HepG2 (cell line): ENCODE measurements at regions of chr22 and their contacts with region 1.

Region 1: GRCh38 chr22:37566903-37567820 is 6.9 kb downstream of the CDC42EP1 start:
- DNase-seq: peak; percentile 61
- ATAC-seq: peak; percentile 27
- H3K4me3 ChIP-seq: no peak overlapping the region; a peak in 1 of 6 replicates
- H3K27ac ChIP-seq: no peak overlapping the region
- H3K4me1 ChIP-seq: peaks cover 90% of the 10 kb centered on the region
- H3K27me3 ChIP-seq: no peaks in the 10 kb centered on the region
- CTCF ChIP-seq: peak; percentile 96
- EP300 ChIP-seq: 0 out of 4 replicates have a peak, but pooled peaks of 1 of the 2 experiments have one; percentile 13
- POLR2A ChIP-seq: peak; percentile 10 to 40; a peak in 1 of 4 replicates
- RAD21 ChIP-seq: peak; percentile 97

Region 2: DNA sequence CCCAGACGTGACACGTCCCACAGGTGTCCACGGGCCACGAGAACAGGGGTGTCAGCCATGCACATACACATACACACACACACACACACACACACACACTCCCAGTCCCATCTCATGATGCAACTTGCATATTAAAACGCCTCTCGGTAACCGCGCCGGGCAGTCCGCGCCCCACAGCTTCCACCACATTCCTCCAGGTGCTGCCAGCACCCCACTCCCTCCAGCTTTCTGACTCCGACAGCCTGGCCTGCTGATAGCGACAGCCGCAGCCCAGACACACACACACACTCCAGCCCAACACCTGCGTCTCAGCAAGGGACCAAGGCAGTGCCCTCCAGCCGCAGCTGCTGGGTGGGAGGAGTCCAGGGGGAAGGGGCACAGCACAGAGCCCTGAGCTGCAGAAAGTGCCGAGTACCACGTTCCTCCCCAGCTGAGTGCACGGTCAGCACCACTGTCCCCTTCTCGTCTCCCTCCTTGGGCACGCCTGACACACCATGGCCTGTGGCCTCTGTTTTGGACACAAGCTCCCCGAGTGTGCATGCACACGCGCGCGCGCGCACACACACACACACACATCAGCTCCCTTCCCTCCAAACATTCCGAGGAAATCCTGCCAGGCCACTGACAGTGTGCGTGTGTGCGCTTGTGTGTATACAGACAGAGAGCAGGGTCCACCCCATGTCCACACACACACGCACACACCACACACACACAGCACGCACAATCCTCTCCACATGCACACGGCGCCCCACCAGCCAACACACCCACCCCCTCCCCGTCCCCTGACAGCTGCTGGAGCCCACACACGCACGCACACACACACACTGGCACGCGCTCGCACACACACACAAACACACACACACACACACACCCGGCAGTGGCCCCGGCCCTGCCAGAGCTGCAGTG is 141.1 kb before region 1 on chr22:
- CTCF ChIA-PET with region 1: no interaction called
- POLR2A ChIA-PET with region 1: no interaction called
- in situ Hi-C with region 1: no loop called
- intact Hi-C with region 1: no loop called
- DNase-seq: no peak
- ATAC-seq: no peak
- H3K4me3 ChIP-seq: no peak overlapping the region
- H3K27ac ChIP-seq: no peak overlapping the region
- H3K4me1 ChIP-seq: peaks cover under 1% of the 10 kb centered on the region; the same call in 1 of the 2 replicates
- H3K27me3 ChIP-seq: peaks cover 15 to 62% of the 10 kb centered on the region in 2 experiments
- CTCF ChIP-seq: no peak
- EP300 ChIP-seq: no peak
- POLR2A ChIP-seq: no peak
- RAD21 ChIP-seq: no peak

Region 3: DNA sequence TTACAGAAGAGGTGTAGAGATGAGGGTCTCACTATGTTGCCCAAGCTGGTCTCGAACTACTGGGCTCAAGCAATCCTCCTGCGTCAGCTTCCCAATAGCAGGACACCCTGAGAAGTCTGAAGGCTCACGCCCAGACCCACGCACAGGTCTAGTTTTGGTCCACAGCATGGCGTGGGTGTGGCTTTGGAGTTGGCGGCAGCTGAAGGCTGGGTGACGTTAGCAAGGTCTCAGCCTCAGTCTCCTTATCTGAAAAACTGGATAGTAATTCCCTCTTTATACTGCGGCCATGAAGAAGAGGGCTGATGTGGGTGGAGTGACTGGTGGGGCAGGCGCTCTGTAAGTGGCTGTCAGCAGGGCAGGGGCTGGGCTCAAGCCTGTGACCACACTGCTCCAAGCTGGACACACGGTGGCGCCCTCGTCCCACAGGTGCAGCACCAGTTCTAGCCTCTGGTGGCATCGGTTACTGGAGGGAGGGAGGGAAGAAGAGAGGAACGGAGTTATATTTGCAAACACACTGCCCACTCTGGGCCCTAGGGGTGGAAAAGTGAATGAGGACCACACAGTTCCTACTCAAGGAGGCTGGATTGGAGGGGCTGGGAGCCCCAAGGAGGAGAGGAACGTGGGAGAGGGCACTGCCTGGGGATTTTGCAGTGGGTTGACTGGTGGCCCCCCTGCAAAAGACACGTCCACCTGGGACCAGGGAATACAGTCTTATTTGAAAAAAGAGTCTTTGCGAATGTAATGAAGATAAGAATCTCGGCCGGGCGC is 28.4 kb before region 1 on chr22:
- CTCF ChIA-PET with region 1: interaction called, 66 read pairs
- POLR2A ChIA-PET with region 1: interaction called, 976 read pairs
- in situ Hi-C with region 1: loop called (anchors 5 kb)
- intact Hi-C with region 1: no loop called
- DNase-seq: peak; percentile 88
- ATAC-seq: peak; percentile 98
- H3K4me3 ChIP-seq: peak overlapping the region in 1 of 3 experiments; percentile 32; a peak in 2 of 6 replicates
- H3K27ac ChIP-seq: no peak overlapping the region
- H3K4me1 ChIP-seq: peaks cover 77% of the 10 kb centered on the region
- H3K27me3 ChIP-seq: 0 out of 5 replicates have a peak, but pooled peaks cover 0 to 2% of the 10 kb centered on the region in 2 experiments
- CTCF ChIP-seq: peak; percentile 100
- EP300 ChIP-seq: peak; percentile 27 to 36; a peak in 2 of 4 replicates
- POLR2A ChIP-seq: no peak
- RAD21 ChIP-seq: peak; percentile 99

Region 4: GRCh38 chr22:37544955-37545699 is 22.0 kb before region 1 on chr22:
- CTCF ChIA-PET with region 1: interaction called, 66 read pairs
- POLR2A ChIA-PET with region 1: interaction called, 976 read pairs
- in situ Hi-C with region 1: no loop called
- intact Hi-C with region 1: loop called (anchors 1 kb)
- DNase-seq: peak; percentile 81
- ATAC-seq: peak; percentile 55
- H3K4me3 ChIP-seq: peak overlapping the region; percentile 32 to 70 (median 39); a peak in 5 of 6 replicates
- H3K27ac ChIP-seq: peak overlapping the region; percentile 90
- H3K4me1 ChIP-seq: peaks cover 89% of the 10 kb centered on the region
- H3K27me3 ChIP-seq: no peaks in the 10 kb centered on the region
- CTCF ChIP-seq: peak; percentile 95
- EP300 ChIP-seq: no peak
- POLR2A ChIP-seq: no peak
- RAD21 ChIP-seq: peak; percentile 83; the same call in 1 of the 2 replicates

Region 5: DNA sequence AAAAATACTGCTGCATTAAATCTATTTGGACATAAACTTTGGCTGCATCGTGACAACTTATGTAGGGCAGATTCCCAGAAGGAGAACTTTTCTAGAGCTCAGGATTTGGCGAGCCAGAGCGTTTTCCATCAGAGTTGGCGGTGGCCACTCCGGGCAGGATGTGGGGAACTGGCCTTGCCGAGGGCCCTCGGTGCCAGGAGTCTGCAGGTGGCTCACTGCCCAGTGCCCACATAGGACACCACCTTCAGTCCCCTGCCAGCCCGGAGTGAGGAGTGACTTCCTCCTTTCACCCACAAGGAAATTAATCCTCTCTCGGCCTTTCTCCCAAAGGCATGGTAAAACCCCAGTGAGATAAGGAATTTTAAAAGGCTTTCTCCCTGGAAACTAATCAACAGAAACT is 14.3 kb after region 1 on chr22:
- CTCF ChIA-PET with region 1: no interaction called
- POLR2A ChIA-PET with region 1: interaction called, 120 read pairs
- in situ Hi-C with region 1: no loop called
- intact Hi-C with region 1: no loop called
- DNase-seq: no peak
- ATAC-seq: no peak
- H3K4me3 ChIP-seq: no peak overlapping the region
- H3K27ac ChIP-seq: no peak overlapping the region
- H3K4me1 ChIP-seq: peaks cover 72% of the 10 kb centered on the region
- H3K27me3 ChIP-seq: peaks cover 0 to 1% of the 10 kb centered on the region in 2 experiments; a peak in 1 of 5 replicates
- CTCF ChIP-seq: no peak
- EP300 ChIP-seq: no peak
- POLR2A ChIP-seq: no peak
- RAD21 ChIP-seq: no peak

Region 6: DNA sequence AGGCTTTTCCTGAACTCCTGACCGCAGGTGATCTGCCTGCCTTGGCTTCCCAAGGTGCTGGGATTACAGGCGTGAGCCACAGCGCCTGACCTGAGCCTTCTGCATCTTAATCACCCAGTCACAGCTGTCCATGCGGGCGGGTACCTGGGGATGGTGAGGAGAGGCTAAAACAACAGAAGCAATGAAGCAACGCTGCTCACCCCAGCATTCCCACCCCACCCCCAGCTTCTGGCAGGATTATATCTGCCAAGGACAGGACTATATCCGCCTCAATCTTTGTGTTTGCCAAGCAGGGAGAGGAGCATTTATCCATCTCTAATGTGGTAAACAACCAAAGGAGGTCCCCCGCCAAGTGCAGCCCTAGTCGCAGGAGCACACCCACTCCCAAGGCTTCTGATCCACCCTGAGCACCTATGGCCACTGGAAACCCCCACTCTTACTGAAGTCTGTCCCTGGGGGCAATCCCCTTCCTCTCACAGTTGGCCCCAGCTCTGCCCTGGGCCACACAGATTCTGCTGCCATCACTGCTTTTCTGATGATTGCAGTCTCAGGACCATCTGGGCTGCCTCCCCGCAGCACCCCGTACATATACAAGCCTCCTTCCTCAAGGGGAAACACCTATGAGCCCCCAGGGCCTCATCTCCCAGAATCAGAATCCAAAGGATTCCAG is 21.5 kb after region 1 on chr22:
- CTCF ChIA-PET with region 1: interaction called, 10 read pairs
- POLR2A ChIA-PET with region 1: interaction called, 113 read pairs
- in situ Hi-C with region 1: no loop called
- intact Hi-C with region 1: loop called (anchors 1 kb)
- DNase-seq: no peak
- ATAC-seq: peak; percentile 32; the same call in 2 of the 3 replicates
- H3K4me3 ChIP-seq: no peak overlapping the region
- H3K27ac ChIP-seq: no peak overlapping the region
- H3K4me1 ChIP-seq: peaks cover 62% of the 10 kb centered on the region
- H3K27me3 ChIP-seq: peaks cover 0 to 24% of the 10 kb centered on the region in 2 experiments; a peak in 3 of 5 replicates
- CTCF ChIP-seq: no peak
- EP300 ChIP-seq: no peak
- POLR2A ChIP-seq: no peak
- RAD21 ChIP-seq: no peak

Region 7: GRCh38 chr22:37601540-37602442 is 34.6 kb after region 1 on chr22:
- CTCF ChIA-PET with region 1: no interaction called
- POLR2A ChIA-PET with region 1: interaction called, 30 read pairs
- in situ Hi-C with region 1: no loop called
- intact Hi-C with region 1: no loop called
- DNase-seq: peak; percentile 91
- ATAC-seq: peak; percentile 95
- H3K4me3 ChIP-seq: peak overlapping the region; percentile 20 to 45 (median 24); a peak in 5 of 6 replicates
- H3K27ac ChIP-seq: peak overlapping the region; percentile 68
- H3K4me1 ChIP-seq: peaks cover 38% of the 10 kb centered on the region
- H3K27me3 ChIP-seq: 0 out of 5 replicates have a peak, but pooled peaks cover 2 to 5% of the 10 kb centered on the region in 2 experiments
- CTCF ChIP-seq: peak; percentile 8; the same call in 1 of the 2 replicates
- EP300 ChIP-seq: no peak
- POLR2A ChIP-seq: peak; percentile 45 to 64; a peak in 2 of 4 replicates
- RAD21 ChIP-seq: no peak

Region 8: GRCh38 chr22:37623075-37624016 is 56.2 kb after region 1 on chr22:
- CTCF ChIA-PET with region 1: no interaction called
- POLR2A ChIA-PET with region 1: no interaction called
- in situ Hi-C with region 1: no loop called
- intact Hi-C with region 1: no loop called
- DNase-seq: peak; percentile 50
- ATAC-seq: peak; percentile 73
- H3K4me3 ChIP-seq: 0 out of 6 replicates have a peak overlapping the region, but pooled peaks of 1 of the 3 experiments have one; percentile 3
- H3K27ac ChIP-seq: no peak overlapping the region
- H3K4me1 ChIP-seq: peaks cover 10% of the 10 kb centered on the region
- H3K27me3 ChIP-seq: no peaks in the 10 kb centered on the region; a peak in 1 of 5 replicates
- CTCF ChIP-seq: peak; percentile 78
- EP300 ChIP-seq: no peak
- POLR2A ChIP-seq: no peak
- RAD21 ChIP-seq: peak; percentile 71